ENCODE measurements at regions of chr19 and their contacts with region 1.

Region 1: DNA sequence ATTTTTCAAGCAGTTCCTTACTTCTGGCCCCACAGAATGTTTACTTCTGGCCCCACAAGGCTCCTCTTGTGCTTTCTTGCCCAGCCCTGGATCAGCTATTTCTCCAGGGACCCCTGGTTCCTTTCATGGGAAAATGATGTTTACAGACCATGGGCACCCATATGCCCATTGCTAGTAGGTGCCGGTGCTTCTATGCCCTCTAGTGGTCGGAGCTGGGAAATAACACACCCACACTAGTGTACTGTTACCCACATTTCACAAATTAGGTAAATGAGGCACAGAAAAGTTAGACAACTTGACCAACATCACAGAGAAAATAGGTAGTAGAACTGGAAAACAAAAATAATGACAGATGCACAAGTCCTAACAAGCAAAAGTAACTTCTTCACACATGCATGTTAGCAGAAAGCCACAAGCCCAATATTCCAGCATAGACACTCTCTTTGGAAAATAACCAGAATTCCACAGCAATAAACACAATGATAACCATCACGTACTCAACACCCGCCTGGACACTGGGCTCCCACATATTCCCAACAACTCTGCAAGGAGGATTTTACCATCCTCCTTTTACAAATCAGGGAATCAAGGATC is 1.3 kb upstream of the CEACAM6 start:
- DNase-seq: peak; percentile 71
- H3K4me3 Mint-ChIP-seq: no peak overlapping the region
- H3K27ac Mint-ChIP-seq: no peak overlapping the region
- H3K4me1 Mint-ChIP-seq: peaks cover 3% of the 10 kb centered on the region
- H3K27me3 Mint-ChIP-seq: peaks cover 35% of the 10 kb centered on the region

Region 2: DNA sequence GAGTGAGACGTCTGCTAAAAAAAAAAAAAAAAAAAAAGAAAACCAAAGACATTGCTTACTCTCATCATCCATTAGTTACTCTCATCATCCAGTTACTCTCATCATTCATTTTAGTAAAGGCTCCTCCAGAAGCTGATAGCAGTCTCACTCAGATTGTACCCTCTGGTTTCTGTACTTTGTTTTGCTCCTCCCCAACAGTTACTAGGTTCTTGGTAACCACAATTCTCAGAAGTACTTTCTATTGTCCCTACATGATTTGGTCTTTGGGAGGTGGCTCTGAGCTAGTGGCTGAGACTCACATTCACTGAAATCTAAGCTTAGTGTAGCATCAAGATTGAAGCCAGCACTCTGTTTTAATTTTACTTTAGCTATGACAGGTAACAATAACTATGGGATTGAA is 296.8 kb before region 1 on chr19:
- CTCF ChIA-PET with region 1: no interaction called
- POLR2A ChIA-PET with region 1: no interaction called
- DNase-seq: no peak
- H3K4me3 Mint-ChIP-seq: peak overlapping the region; percentile 45
- H3K27ac Mint-ChIP-seq: peak overlapping the region; percentile 78
- H3K4me1 Mint-ChIP-seq: peaks cover 45% of the 10 kb centered on the region
- H3K27me3 Mint-ChIP-seq: peaks cover 3% of the 10 kb centered on the region

Region 3: DNA sequence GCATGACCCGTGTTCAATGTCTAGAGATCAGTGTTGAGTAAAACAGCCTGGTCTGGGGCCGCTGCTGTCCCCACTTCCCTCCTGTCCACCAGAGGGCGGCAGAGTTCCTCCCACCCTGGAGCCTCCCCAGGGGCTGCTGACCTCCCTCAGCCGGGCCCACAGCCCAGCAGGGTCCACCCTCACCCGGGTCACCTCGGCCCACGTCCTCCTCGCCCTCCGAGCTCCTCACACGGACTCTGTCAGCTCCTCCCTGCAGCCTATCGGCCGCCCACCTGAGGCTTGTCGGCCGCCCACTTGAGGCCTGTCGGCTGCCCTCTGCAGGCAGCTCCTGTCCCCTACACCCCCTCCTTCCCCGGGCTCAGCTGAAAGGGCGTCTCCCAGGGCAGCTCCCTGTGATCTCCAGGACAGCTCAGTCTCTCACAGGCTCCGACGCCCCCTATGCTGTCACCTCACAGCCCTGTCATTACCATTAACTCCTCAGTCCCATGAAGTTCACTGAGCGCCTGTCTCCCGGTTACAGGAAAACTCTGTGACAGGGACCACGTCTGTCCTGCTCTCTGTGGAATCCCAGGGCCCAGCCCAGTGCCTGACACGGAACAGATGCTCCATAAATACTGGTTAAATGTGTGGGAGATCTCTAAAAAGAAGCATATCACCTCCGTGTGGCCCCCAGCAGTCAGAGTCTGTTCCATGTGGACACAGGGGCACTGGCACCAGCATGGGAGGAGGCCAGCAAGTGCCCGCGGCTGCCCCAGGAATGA is 47.1 kb before region 1 on chr19:
- CTCF ChIA-PET with region 1: interaction called, 14 read pairs
- POLR2A ChIA-PET with region 1: no interaction called
- DNase-seq: peak; percentile 69
- H3K4me3 Mint-ChIP-seq: peak overlapping the region; percentile 62
- H3K27ac Mint-ChIP-seq: no peak overlapping the region
- H3K4me1 Mint-ChIP-seq: peaks cover 4% of the 10 kb centered on the region
- H3K27me3 Mint-ChIP-seq: peaks cover 14% of the 10 kb centered on the region

Region 4: GRCh38 chr19:41740415-41741243 is 13.4 kb before region 1 on chr19:
- CTCF ChIA-PET with region 1: interaction called, 23 read pairs
- POLR2A ChIA-PET with region 1: no interaction called
- DNase-seq: no peak
- H3K4me3 Mint-ChIP-seq: no peak overlapping the region
- H3K27ac Mint-ChIP-seq: no peak overlapping the region
- H3K4me1 Mint-ChIP-seq: peaks cover 9% of the 10 kb centered on the region
- H3K27me3 Mint-ChIP-seq: peaks cover 47% of the 10 kb centered on the region

Region 5: DNA sequence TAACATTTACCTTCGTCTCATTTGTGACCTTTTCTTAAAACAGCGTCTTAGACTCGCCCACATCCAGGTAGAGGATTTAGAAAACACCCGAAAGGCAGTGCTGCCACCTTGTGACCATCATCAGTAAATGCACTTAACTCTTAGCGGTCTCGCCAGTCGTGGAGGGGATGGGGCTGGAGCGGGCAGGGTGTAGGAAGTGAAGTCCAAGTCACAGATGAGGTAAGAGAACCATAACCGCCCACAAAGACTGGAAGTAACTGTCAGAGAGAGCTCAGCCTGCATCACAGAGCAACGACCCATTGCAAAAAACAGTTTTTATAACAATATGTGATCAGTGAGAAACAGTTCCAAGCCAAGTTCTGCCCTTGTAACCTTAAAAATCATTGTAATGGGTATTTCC is 31.6 kb after region 1 on chr19:
- CTCF ChIA-PET with region 1: interaction called, 139 read pairs
- POLR2A ChIA-PET with region 1: interaction called, 8 read pairs
- DNase-seq: peak; percentile 79
- H3K4me3 Mint-ChIP-seq: no peak overlapping the region
- H3K27ac Mint-ChIP-seq: no peak overlapping the region
- H3K4me1 Mint-ChIP-seq: peaks cover 17% of the 10 kb centered on the region
- H3K27me3 Mint-ChIP-seq: peaks cover 55% of the 10 kb centered on the region

Region 6: GRCh38 chr19:41821003-41821735 is 67.1 kb after region 1 on chr19:
- CTCF ChIA-PET with region 1: interaction called, 12 read pairs
- POLR2A ChIA-PET with region 1: no interaction called
- DNase-seq: peak; percentile 47
- H3K4me3 Mint-ChIP-seq: no peak overlapping the region
- H3K27ac Mint-ChIP-seq: no peak overlapping the region
- H3K4me1 Mint-ChIP-seq: peaks cover 3% of the 10 kb centered on the region
- H3K27me3 Mint-ChIP-seq: peaks cover 32% of the 10 kb centered on the region

Region 7: DNA sequence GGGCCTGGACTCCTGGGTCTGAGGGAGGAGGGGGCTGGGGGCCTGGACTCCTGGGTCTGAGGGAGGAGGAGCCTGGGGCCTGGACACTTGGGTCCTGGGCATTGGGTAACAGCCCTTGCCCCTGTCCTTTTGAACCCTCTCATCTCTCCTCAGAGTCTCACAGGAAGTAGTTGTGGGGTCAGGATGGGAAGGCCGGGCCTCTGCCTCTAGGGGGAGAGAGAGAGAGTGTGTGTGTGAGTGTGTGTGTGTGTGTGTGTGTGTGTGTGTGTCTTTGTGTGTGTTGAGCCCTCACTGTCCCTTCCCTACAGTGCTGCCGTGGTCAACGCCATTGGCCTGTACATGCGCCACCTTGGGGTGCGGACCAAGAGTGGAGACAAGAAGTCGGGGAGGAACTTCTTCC is 139.9 kb after region 1 on chr19:
- CTCF ChIA-PET with region 1: no interaction called
- POLR2A ChIA-PET with region 1: no interaction called
- DNase-seq: no peak
- H3K4me3 Mint-ChIP-seq: no peak overlapping the region
- H3K27ac Mint-ChIP-seq: peak overlapping the region; percentile 35
- H3K4me1 Mint-ChIP-seq: peaks cover 50% of the 10 kb centered on the region
- H3K27me3 Mint-ChIP-seq: no peaks in the 10 kb centered on the region

Measured in activated CD4-positive, alpha-beta memory T cell treated with anti-CD3 and anti-CD28 coated beads, Interleukin-2, amount 10 ng/mL, durations not matched to agents 7 days and 5 days (primary cell).